ENCODE measurements at regions of chr6 and their contacts with region 1.

Region 1: DNA sequence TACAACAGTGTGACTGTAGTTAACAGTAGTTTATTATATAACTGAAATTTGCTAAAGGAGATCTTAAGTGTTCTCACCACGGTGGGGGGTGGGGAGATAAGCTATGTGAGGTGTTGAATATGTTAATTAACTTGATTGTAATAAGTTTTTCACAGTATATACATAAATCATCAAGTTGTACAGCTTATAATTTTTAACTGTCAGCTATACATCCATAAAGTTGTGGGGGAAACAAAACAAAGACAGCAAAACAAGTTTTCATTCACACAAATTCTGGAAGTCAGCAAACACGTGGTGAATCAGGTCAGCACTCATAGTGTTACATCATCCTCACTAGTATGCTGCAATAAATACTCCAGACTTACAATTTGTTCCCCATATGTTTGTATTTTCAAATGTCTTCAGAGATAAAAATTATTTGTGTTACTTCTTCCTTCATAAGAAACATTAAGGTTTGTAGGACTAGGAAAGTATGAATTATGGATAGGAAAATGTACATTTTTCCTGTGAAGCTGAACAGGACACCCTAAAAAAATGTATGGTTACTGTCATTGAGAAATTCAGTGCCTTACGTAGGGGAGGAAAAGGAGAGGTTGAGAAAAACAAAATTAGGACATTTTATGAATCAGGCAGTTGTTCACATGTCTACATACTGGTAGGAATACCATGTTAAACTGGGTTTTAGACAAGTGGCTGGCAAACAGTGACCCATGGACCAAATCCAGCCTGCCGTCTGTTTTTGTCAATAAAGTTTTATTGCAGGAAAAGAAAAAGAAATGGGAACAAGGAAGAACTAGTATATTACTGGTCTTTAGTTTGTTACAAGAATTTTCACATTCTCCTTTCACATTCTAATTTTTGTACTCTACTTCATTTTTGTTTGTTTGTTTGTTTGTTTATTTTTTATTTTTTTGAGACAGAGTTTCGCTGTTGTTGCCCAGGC is 6.0 kb downstream of the SUMO4 start:
- DNase-seq: no peak
- H3K4me3 Mint-ChIP-seq: no peak overlapping the region
- H3K27ac Mint-ChIP-seq: no peak overlapping the region
- H3K4me1 Mint-ChIP-seq: no peaks in the 10 kb centered on the region
- H3K27me3 Mint-ChIP-seq: no peaks in the 10 kb centered on the region
- CTCF ChIP-seq: no peak

Region 2: GRCh38 chr6:149026530-149026942 is 379.6 kb before region 1 on chr6:
- CTCF ChIA-PET with region 1: no interaction called
- intact Hi-C with region 1: no loop called
- DNase-seq: peak; percentile 36
- H3K4me3 Mint-ChIP-seq: no peak overlapping the region
- H3K27ac Mint-ChIP-seq: no peak overlapping the region
- H3K4me1 Mint-ChIP-seq: peaks cover 11% of the 10 kb centered on the region
- H3K27me3 Mint-ChIP-seq: no peaks in the 10 kb centered on the region
- CTCF ChIP-seq: no peak

Region 3: GRCh38 chr6:149335924-149336608 is 70.0 kb before region 1 on chr6:
- CTCF ChIA-PET with region 1: no interaction called
- intact Hi-C with region 1: loop called (anchors 5 kb)
- DNase-seq: no peak
- H3K4me3 Mint-ChIP-seq: peak overlapping the region; percentile 14
- H3K27ac Mint-ChIP-seq: peak overlapping the region; percentile 14
- H3K4me1 Mint-ChIP-seq: peaks cover 67% of the 10 kb centered on the region
- H3K27me3 Mint-ChIP-seq: no peaks in the 10 kb centered on the region
- CTCF ChIP-seq: no peak

Region 4: DNA sequence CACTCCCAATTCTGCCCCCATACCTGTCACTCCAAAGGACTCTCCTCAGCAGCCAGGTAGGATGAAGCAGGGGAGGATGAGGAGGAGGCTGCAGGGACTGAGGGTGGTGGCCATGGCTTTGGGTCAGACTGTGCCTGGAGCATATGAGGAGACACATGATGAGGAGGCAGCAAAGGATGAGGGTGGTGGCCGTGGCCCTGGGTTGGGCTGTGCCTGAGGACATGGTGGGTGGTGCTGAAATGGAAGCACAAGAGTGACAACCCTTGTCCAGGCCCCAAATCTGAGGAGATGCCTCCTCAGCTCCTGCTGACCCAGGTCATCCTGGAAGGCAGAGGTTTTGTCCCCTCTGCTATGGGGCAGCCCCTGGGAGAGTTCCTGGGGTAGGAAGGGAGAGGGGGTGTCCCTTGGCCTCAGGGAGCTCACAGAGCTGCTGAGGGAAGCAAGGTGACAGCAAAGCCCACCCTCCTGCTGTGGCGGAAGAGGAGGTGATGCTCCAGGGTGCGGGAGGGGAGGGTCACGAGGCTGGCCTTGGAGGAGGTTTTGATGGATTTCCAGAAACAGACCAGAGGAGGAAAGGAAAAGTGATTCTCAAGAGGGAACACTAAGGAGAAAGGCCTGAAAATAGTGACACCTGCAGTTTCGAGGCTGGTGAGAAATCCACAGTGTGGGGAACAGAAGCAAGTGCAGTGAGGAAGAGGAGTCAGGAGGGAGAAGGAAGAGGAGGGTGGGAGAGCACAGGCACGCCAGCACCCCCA is 512.2 kb after region 1 on chr6:
- CTCF ChIA-PET with region 1: no interaction called
- intact Hi-C with region 1: no loop called
- DNase-seq: no peak
- H3K4me3 Mint-ChIP-seq: no peak overlapping the region
- H3K27ac Mint-ChIP-seq: no peak overlapping the region
- H3K4me1 Mint-ChIP-seq: peaks cover 3% of the 10 kb centered on the region
- H3K27me3 Mint-ChIP-seq: peaks cover 39% of the 10 kb centered on the region
- CTCF ChIP-seq: no peak